ENCODE measurements at regions of chr10 and their contacts with region 1.

Region 1: GRCh38 chr10:42782446-42783180 is at the start of gene BMS1:
- DNase-seq: peak; percentile 94
- ATAC-seq: peak; percentile 87
- H3K4me3 Mint-ChIP-seq: peak within 1 kb of the TSS; percentile 90
- H3K27ac Mint-ChIP-seq: peak within 1 kb of the TSS; percentile 93
- H3K4me1 Mint-ChIP-seq: peaks cover 30% of the 10 kb centered on the region
- H3K27me3 Mint-ChIP-seq: no peaks in the 10 kb centered on the region
- total RNA-seq, gene BMS1: 26.5 to 30.4 TPM

Region 2: GRCh38 chr10:42638055-42638820 is 144.4 kb before region 1 on chr10 and contains the start of gene ZNF33B:
- CTCF ChIA-PET with region 1: no interaction called
- POLR2A ChIA-PET with region 1: interaction called, 3 read pairs
- intact Hi-C with region 1: loop called (anchors 1 kb)
- DNase-seq: peak; percentile 97
- ATAC-seq: peak; percentile 95
- H3K4me3 Mint-ChIP-seq: peak within 1 kb of the TSS; percentile 88
- H3K27ac Mint-ChIP-seq: peak within 1 kb of the TSS; percentile 97
- H3K4me1 Mint-ChIP-seq: peaks cover 25% of the 10 kb centered on the region
- H3K27me3 Mint-ChIP-seq: no peaks in the 10 kb centered on the region
- total RNA-seq, gene ZNF33B: 7.4 to 10.5 TPM

Region 3: DNA sequence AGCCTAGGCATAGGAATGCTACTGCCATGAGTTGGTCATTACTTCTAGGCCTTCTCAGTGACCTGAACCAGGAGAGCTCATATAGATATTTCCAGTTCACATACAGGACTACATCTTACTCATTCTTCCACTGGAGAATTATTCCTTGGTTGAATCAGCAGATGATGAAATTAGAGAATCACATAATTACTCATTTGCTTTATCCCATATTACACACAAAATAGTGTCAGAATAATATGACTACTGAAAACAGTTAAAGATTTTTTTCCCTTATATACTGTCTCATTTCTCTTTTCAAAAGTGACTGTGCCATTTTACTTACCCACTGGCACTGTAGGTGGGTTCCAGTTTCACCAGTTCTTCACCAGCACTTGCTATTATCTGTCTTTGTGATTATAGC is 18.5 kb after region 1 on chr10:
- CTCF ChIA-PET with region 1: interaction called, 10 read pairs
- POLR2A ChIA-PET with region 1: no interaction called
- intact Hi-C with region 1: loop called in 1 of 2 experiments (anchors 1 kb)
- DNase-seq: peak; percentile 24
- ATAC-seq: peak; percentile 94
- H3K4me3 Mint-ChIP-seq: no peak overlapping the region
- H3K27ac Mint-ChIP-seq: peak overlapping the region; percentile 89
- H3K4me1 Mint-ChIP-seq: peaks cover 31% of the 10 kb centered on the region
- H3K27me3 Mint-ChIP-seq: no peaks in the 10 kb centered on the region

Region 4: GRCh38 chr10:43204943-43205671 is 422.5 kb after region 1 on chr10:
- CTCF ChIA-PET with region 1: no interaction called
- POLR2A ChIA-PET with region 1: no interaction called
- intact Hi-C with region 1: no loop called
- DNase-seq: peak; percentile 84
- ATAC-seq: peak; percentile 76
- H3K4me3 Mint-ChIP-seq: no peak overlapping the region
- H3K27ac Mint-ChIP-seq: no peak overlapping the region
- H3K4me1 Mint-ChIP-seq: peaks cover 4% of the 10 kb centered on the region
- H3K27me3 Mint-ChIP-seq: no peaks in the 10 kb centered on the region

Region 5: GRCh38 chr10:43361986-43362839 is 579.6 kb after region 1 on chr10:
- CTCF ChIA-PET with region 1: no interaction called
- POLR2A ChIA-PET with region 1: no interaction called
- intact Hi-C with region 1: loop called in 1 of 2 experiments (anchors 1 kb)
- DNase-seq: peak; percentile 99
- ATAC-seq: peak; percentile 96
- H3K4me3 Mint-ChIP-seq: peak overlapping the region; percentile 95
- H3K27ac Mint-ChIP-seq: peak overlapping the region; percentile 98
- H3K4me1 Mint-ChIP-seq: peaks cover 22% of the 10 kb centered on the region
- H3K27me3 Mint-ChIP-seq: no peaks in the 10 kb centered on the region

Measured in activated CD4-positive, alpha-beta T cell treated with anti-CD3 and anti-CD28 coated beads for 36 hours (primary cell).